ENCODE measurements at regions of chr2 and their contacts with region 1.

Region 1: GRCh38 chr2:85545780-85546240 is 6.8 kb downstream of the MAT2A start:
- DNase-seq: no peak
- ATAC-seq: peak; percentile 8
- H3K4me3 ChIP-seq: no peak overlapping the region
- H3K27ac ChIP-seq: peak overlapping the region; percentile 6
- H3K4me1 ChIP-seq: peaks cover 27% of the 10 kb centered on the region
- H3K27me3 ChIP-seq: no peaks in the 10 kb centered on the region
- CTCF ChIP-seq: no peak
- EP300 ChIP-seq: no peak
- POLR2A ChIP-seq: peak; percentile 60
- RAD21 ChIP-seq: no peak

Region 2: GRCh38 chr2:85595301-85596025 is 49.7 kb after region 1 on chr2 and contains the start of gene RNF181:
- CTCF ChIA-PET with region 1: no interaction called
- POLR2A ChIA-PET with region 1: interaction called, 645 read pairs
- in situ Hi-C with region 1: no loop called
- intact Hi-C with region 1: no loop called
- DNase-seq: peak; percentile 99
- ATAC-seq: peak; percentile 92
- H3K4me3 ChIP-seq: peak within 1 kb of the TSS; percentile 88 to 97 (median 90)
- H3K27ac ChIP-seq: peak within 1 kb of the TSS; percentile 80
- H3K4me1 ChIP-seq: peaks cover 86% of the 10 kb centered on the region
- H3K27me3 ChIP-seq: no peaks in the 10 kb centered on the region; a peak in 1 of 5 replicates
- CTCF ChIP-seq: no peak
- EP300 ChIP-seq: no peak
- POLR2A ChIP-seq: peak in 1 of 2 experiments; percentile 77; a peak in 1 of 4 replicates
- RAD21 ChIP-seq: no peak; the same call in 1 of the 2 replicates
- total RNA-seq, gene RNF181: 224 and 234 TPM in 2 replicates

Region 3: DNA sequence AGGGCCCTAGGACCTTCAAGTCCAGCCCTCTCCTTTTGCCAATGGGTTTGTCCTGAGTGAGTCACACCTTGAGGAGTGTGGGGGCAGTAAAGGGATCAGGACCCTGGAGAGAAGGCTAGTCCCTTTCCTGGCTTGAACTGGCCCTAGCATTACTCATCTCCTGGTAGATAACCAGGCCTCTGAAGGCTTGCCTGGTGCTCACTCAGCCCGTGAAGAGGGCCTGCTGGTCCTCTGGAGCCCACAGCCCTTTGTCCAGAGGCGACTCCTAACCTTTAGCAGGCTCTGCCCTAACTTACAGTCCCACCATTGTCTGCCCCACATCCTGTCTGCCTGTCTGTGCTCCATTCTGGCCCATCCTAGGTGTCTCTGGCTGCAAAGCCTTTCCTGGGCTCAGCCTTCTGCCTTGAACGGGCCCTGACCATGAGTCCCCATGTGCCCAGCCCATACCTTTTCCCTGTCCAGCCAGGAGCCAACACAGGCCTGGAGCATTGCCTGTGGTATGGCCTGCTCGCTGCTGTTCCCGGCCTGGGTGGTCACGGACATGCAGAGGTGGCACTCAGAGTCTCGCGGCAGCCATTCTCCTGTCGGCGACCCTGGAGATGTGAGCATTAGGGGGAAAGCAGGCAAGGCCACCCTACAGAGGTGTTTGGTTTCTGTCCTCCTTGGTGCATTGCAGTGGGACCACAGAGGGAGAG is 117.2 kb after region 1 on chr2:
- CTCF ChIA-PET with region 1: no interaction called
- POLR2A ChIA-PET with region 1: no interaction called
- in situ Hi-C with region 1: no loop called
- intact Hi-C with region 1: no loop called
- DNase-seq: peak; percentile 15
- ATAC-seq: peak; percentile 5
- H3K4me3 ChIP-seq: no peak overlapping the region
- H3K27ac ChIP-seq: no peak overlapping the region
- H3K4me1 ChIP-seq: peaks cover 25% of the 10 kb centered on the region
- H3K27me3 ChIP-seq: peaks cover 0 to 19% of the 10 kb centered on the region in 2 experiments; a peak in 3 of 5 replicates
- CTCF ChIP-seq: no peak
- EP300 ChIP-seq: no peak
- POLR2A ChIP-seq: no peak
- RAD21 ChIP-seq: no peak